ENCODE measurements at regions of chr2 and their contacts with region 1.

Region 1: GRCh38 chr2:101883863-101884262 is 107.9 kb upstream of the IL1R2 start:
- DNase-seq: no peak
- H3K4me3 ChIP-seq: no peak overlapping the region
- H3K27ac ChIP-seq: no peak overlapping the region
- H3K4me1 ChIP-seq: no peaks in the 10 kb centered on the region
- H3K27me3 ChIP-seq: no peaks in the 10 kb centered on the region
- CTCF ChIP-seq: peak; percentile 28 to 57 (median 55)
- POLR2A ChIP-seq: no peak

Region 2: DNA sequence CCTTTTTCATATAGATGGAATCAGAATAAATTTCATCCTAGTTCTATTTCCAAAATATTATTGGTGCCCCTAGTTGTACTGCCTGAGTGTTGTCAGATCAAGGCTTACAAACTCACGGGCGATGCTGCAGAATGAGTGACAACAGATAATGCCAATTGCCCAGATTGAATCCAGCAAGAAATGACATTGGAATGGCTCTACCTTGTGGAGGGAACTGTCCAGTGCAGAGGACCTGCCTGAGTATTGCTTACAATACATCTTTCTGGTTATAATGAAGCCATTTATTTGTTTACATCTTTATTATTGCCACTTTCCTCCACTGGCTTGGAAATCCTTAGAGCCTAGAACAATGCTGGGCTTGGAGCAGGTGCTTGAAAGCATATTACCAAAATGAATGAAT is 100.1 kb after region 1 on chr2:
- intact Hi-C with region 1: loop called (anchors 10 kb)
- DNase-seq: no peak
- H3K4me3 ChIP-seq: no peak overlapping the region
- H3K27ac ChIP-seq: no peak overlapping the region
- H3K4me1 ChIP-seq: no peaks in the 10 kb centered on the region
- H3K27me3 ChIP-seq: no peaks in the 10 kb centered on the region
- CTCF ChIP-seq: peak in 1 of 3 donors; percentile 13
- POLR2A ChIP-seq: no peak